Natural killer cell (primary cell): ENCODE measurements at regions of chr12 and their contacts with region 1.

Region 1: GRCh38 chr12:95858479-95859343 is at the start of gene SNRPF:
- DNase-seq: peak; percentile 94 to 97
- ATAC-seq: peak; percentile 94 to 98 (median 97)
- H3K4me3 ChIP-seq: peak within 1 kb of the TSS; percentile 97
- H3K4me3 Mint-ChIP-seq: peak within 1 kb of the TSS; percentile 22
- H3K27ac ChIP-seq: peak within 1 kb of the TSS; percentile 89
- H3K27ac Mint-ChIP-seq: no peak within 1 kb of the TSS
- H3K4me1 ChIP-seq: peaks cover 13% of the 10 kb centered on the region
- H3K4me1 Mint-ChIP-seq: peaks cover 10 to 17% of the 10 kb centered on the region in 2 donors
- H3K27me3 ChIP-seq: peaks cover 6% of the 10 kb centered on the region
- H3K27me3 Mint-ChIP-seq: peaks cover 6 to 9% of the 10 kb centered on the region in 2 donors
- CTCF ChIP-seq: no peak
- total RNA-seq, gene SNRPF: 22.7 to 25.3 (median 24.5) TPM

Region 2: DNA sequence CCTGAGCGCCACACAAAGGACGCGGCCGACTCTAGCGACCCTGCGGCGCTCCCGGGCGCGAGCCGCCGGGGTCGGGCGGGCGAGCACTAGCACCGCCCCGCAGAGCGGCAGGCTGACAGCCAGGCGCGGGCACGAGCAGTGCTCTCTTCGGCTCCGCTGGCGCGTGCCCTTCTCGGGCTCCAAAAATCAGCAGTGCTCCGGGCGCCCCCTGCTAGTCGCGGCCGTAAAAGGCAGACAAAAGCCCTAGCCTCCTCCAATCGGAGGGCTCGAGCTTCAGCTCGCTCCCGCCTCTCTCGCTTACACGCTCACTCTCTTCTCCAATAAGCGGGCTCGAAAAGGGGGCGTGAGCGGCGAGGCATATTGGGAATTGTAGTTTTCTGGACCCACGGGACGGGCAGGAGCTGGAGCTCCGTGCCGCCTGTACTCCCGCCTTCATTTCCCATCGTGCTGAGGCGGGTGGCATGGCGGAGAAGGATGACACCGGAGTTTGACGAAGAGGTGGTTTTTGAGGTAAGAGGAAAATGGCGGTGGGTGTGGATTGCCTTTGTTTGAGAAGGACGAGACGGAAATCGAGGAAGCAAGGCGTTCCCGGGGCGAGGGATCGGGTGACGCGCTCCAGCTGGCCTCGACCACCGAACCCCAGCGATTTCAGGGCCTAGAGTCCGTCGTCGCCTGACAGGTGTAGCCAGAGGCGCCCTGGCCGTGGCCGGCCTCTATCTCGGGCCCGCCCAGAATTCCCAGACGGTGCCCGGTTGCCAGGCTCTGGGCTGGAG is 641.1 kb before region 1 on chr12 and contains the starts of genes FGD6 and VEZT:
- intact Hi-C with region 1: loop called (anchors 5 kb)
- DNase-seq: peak; percentile 93 to 98
- ATAC-seq: peak; percentile 93 to 98 (median 94)
- H3K4me3 ChIP-seq: peak within 1 kb of the TSS; percentile 95
- H3K4me3 Mint-ChIP-seq: peak within 1 kb of the TSS; percentile 100
- H3K27ac ChIP-seq: peak within 1 kb of the TSS; percentile 85
- H3K27ac Mint-ChIP-seq: peak within 1 kb of the TSS; percentile 91 to 97
- H3K4me1 ChIP-seq: peaks cover 10% of the 10 kb centered on the region
- H3K4me1 Mint-ChIP-seq: peaks cover 27 to 31% of the 10 kb centered on the region in 2 donors
- H3K27me3 ChIP-seq: peaks cover 5% of the 10 kb centered on the region
- H3K27me3 Mint-ChIP-seq: peaks cover 6 to 9% of the 10 kb centered on the region in 2 donors
- CTCF ChIP-seq: peak; percentile 63
- total RNA-seq, gene FGD6: 1.5 to 1.9 (median 1.9) TPM
- total RNA-seq, gene VEZT: 32.7 to 37.0 (median 35.1) TPM

Region 3: DNA sequence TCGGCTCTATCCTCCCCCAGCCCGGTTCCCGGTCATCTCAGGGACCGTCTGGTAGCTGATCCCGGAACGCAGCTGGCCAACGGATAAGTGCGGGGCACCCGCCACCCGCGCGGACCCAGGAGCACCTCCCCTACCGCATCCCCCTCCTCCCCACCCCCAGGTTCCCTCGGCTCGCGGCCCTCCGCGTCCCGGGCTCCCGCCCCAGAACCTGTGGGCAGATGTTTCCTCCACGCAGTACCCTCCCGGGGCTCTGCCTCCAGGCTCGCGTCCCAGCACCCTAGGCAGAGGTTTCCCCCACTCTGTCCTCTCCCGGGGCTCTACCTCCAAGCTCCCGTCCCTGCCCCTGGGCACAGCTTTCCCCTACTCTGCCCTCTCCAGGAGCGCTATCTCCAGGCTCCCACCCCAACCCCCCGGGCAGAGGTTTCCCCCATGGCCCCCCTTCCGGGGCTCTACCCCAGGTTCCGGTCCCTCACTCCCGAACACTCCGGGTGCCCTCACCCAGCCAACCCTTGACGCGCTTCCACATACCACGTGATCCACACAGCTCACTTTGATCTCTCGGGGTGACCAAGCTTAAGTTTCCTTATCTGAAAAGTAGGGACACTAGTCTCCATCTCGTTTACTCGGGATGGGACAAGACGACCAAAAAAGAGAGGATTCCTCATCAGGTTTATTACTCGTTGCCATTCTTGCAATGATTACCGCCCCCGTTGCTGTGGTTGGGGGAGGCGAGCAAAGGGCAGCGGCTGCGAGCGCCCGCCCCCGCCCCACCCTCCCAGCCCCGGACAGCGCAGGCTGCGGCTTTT is 84.0 kb after region 1 on chr12 and contains the start of gene CCDC38:
- intact Hi-C with region 1: loop called (anchors 2 kb)
- DNase-seq: peak; percentile 66 to 90
- ATAC-seq: peak; percentile 93 to 97 (median 95)
- H3K4me3 ChIP-seq: peak within 1 kb of the TSS; percentile 84
- H3K4me3 Mint-ChIP-seq: peak within 1 kb of the TSS; percentile 96
- H3K27ac ChIP-seq: peak within 1 kb of the TSS; percentile 65
- H3K27ac Mint-ChIP-seq: peak within 1 kb of the TSS; percentile 69 to 93
- H3K4me1 ChIP-seq: peaks cover 13% of the 10 kb centered on the region
- H3K4me1 Mint-ChIP-seq: peaks cover 6 to 7% of the 10 kb centered on the region in 2 donors
- H3K27me3 ChIP-seq: no peaks in the 10 kb centered on the region
- H3K27me3 Mint-ChIP-seq: peaks cover 0 to 12% of the 10 kb centered on the region in 2 donors
- CTCF ChIP-seq: peak; percentile 24
- total RNA-seq, gene CCDC38: 0.35 to 1.2 (median 0.63) TPM

Region 4: DNA sequence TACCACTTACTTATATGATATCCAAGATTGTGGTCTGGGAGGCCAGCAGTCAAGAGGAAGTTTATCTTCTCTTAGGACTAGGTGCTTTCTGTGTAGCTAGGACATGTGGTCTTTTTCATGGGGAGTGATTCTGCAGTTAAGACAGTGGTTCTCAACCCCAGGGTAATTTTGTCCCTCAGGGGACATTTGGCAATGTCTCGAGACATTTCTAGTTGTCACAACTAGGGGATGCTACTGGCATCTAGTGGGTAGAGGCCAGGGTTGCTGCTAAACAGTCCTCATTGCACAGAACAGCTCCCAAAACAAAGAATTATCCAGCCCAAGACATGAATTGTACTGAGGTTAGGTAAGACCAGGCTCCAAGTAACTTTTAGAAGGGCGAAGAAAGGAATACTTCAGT is 104.4 kb after region 1 on chr12:
- intact Hi-C with region 1: no loop called
- DNase-seq: no peak
- ATAC-seq: no peak
- H3K4me3 ChIP-seq: no peak overlapping the region
- H3K4me3 Mint-ChIP-seq: no peak overlapping the region
- H3K27ac ChIP-seq: no peak overlapping the region
- H3K27ac Mint-ChIP-seq: no peak overlapping the region
- H3K4me1 ChIP-seq: no peaks in the 10 kb centered on the region
- H3K4me1 Mint-ChIP-seq: no peaks in the 10 kb centered on the region
- H3K27me3 ChIP-seq: no peaks in the 10 kb centered on the region
- H3K27me3 Mint-ChIP-seq: no peaks in the 10 kb centered on the region
- CTCF ChIP-seq: no peak

Region 5: GRCh38 chr12:96035278-96036236 is 176.8 kb after region 1 on chr12 and contains the start of gene LTA4H:
- intact Hi-C with region 1: loop called (anchors 1 kb)
- DNase-seq: peak; percentile 93 to 99
- ATAC-seq: peak; percentile 94 to 99 (median 95)
- H3K4me3 ChIP-seq: peak within 1 kb of the TSS; percentile 97
- H3K4me3 Mint-ChIP-seq: no peak within 1 kb of the TSS
- H3K27ac ChIP-seq: peak within 1 kb of the TSS; percentile 78
- H3K27ac Mint-ChIP-seq: no peak within 1 kb of the TSS
- H3K4me1 ChIP-seq: peaks cover 8% of the 10 kb centered on the region
- H3K4me1 Mint-ChIP-seq: peaks cover 0 to 14% of the 10 kb centered on the region in 2 donors
- H3K27me3 ChIP-seq: no peaks in the 10 kb centered on the region
- H3K27me3 Mint-ChIP-seq: no peaks in the 10 kb centered on the region
- CTCF ChIP-seq: no peak
- total RNA-seq, gene LTA4H: 43.1 to 51.9 (median 48.3) TPM